ENCODE measurements at regions of chr9 and their contacts with region 1.

Region 1: GRCh38 chr9:133792721-133793470 is 54.7 kb upstream of the SARDH start:
- DNase-seq: peak; percentile 70 to 81
- ATAC-seq: peak; percentile 80 to 92
- H3K4me3 ChIP-seq: no peak overlapping the region
- H3K27ac ChIP-seq: peak overlapping the region; percentile 63 to 81
- H3K4me1 ChIP-seq: peaks cover 9% of the 10 kb centered on the region
- CTCF ChIP-seq: peak; percentile 78
- EP300 ChIP-seq: no peak
- POLR2A ChIP-seq: no peak
- RAD21 ChIP-seq: peak; percentile 88 to 90

Region 2: DNA sequence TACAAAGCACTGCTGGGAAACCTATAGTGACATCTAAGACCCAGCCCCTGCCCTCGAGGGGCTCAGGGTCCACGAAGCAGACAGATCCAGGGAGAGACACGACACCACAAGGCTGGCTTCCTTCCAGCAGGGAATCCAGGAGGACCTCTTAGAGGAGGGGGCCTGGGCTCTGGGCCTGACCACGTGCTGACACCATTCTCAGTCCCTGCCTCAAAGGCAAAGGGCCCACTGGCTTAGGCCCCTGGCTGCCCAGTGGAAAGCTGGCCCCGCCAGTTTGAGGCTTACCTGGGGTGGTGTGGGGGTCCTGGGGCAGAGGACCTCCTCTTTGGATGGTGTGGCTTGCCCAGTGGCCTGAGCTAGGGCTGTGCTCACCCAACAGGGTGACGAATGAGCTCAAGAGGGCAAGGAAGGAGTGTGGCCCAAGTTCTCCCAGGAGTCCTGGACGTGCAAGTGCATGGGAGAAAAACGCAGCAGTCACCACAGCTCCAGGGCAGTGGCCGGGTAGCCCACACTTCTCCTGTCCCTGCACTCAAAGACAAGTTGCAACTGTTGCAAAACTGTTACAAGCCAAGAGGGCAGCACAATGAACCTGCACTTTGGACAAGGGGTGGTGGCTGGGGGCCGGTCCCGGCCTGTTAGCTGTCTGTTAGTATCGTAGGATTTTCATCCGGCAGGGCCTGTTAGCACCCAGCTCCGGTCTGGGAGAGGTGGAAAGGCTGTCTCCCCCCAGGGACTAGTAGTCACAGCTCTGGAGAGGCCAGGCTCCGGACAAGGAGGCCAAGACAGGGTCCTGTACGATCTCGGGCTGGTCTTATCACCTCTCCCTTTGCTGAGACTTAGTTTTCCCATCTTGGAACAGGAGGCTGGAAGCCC is 53.3 kb before region 1 on chr9:
- CTCF ChIA-PET with region 1: no interaction called
- POLR2A ChIA-PET with region 1: no interaction called
- DNase-seq: no peak
- ATAC-seq: no peak
- H3K4me3 ChIP-seq: no peak overlapping the region
- H3K27ac ChIP-seq: no peak overlapping the region
- H3K4me1 ChIP-seq: no peaks in the 10 kb centered on the region; the same call in 2 of the 3 replicates
- CTCF ChIP-seq: no peak
- EP300 ChIP-seq: no peak
- POLR2A ChIP-seq: no peak
- RAD21 ChIP-seq: no peak

Region 3: DNA sequence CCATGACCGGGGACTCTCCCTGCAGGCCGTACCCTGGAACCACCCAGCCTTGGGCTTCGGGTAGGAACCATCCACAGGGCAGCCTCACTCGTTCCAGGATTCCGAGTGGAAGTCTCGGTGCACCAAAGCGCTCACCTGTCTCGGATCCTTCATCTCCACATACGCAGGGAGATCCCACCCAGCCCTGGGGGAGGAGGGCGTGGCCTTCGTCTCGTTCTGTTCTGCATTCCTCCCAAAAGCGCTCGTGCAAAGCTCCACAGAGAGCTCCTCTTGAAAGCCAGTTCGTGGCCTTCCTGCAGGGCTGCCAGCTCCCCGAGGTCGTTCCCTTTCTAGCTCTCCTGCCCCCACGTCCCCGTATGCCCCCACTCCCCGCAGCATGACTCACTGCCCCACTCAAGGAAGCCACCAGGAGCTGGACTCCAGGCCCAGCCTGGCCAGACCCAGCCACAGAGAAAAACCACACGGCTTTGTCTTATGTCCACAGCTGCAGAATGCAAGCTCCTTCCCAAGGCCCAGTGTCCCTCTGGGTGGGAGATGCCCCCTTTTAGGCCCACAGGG is 10.2 kb after region 1 on chr9:
- CTCF ChIA-PET with region 1: interaction called, 47 read pairs
- POLR2A ChIA-PET with region 1: no interaction called
- DNase-seq: no peak
- ATAC-seq: no peak
- H3K4me3 ChIP-seq: no peak overlapping the region
- H3K27ac ChIP-seq: no peak overlapping the region
- H3K4me1 ChIP-seq: no peaks in the 10 kb centered on the region
- CTCF ChIP-seq: no peak
- EP300 ChIP-seq: no peak
- POLR2A ChIP-seq: no peak
- RAD21 ChIP-seq: no peak

Region 4: DNA sequence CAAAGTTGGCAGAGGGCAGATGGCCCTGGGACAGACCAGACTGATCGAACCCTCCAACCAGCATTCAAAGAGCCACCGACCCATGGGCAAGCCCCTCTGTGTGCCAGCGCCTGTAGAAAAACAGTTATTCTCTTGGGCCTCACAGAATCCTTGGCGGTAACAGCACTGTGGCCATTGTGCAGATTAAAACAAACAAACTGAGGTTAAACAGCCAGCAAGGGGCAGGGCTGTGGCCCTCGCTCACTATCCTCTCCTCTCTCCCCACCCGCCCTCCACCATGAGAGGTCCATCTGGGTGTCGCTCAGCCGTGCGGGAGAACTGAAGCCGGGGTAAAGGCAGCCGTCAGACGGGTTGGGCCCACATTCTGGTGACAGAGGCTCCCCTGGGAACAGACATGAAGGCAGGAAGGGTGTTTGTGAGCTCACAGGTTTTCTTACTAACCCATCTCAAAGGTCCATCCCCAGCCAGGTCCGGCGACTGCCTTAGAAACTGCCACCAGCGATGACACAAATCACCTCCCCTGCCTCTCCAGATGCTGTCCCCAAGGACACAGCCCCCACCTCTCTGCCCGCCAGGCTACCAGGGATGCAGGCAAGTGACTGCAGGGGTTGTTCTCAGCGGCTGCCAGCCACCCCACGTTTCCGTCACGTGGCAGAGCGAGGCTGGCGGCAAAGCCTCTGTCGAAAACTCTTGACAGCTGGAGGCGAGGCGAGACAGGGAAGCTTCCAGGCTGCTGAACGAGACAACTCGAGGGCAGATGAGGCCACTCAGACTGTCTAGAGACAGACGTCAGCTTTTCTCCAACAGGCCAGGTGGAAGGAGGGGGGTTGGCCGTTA is 21.1 kb after region 1 on chr9:
- CTCF ChIA-PET with region 1: interaction called, 21 read pairs
- POLR2A ChIA-PET with region 1: no interaction called
- DNase-seq: no peak
- ATAC-seq: no peak
- H3K4me3 ChIP-seq: no peak overlapping the region
- H3K27ac ChIP-seq: no peak overlapping the region
- H3K4me1 ChIP-seq: peaks cover 7% of the 10 kb centered on the region; the same call in 2 of the 3 replicates
- CTCF ChIP-seq: no peak
- EP300 ChIP-seq: no peak
- POLR2A ChIP-seq: no peak
- RAD21 ChIP-seq: no peak

Measured in A549 (cell line).